Dendritic cell treated with granulocyte-macrophage colony-stimulating factor and Interleukin-4, amounts not matched to agents 40 ng/mL and 50 ng/mL, for 4 days (primary cell): ENCODE measurements at regions of chr11 and their contacts with region 1.

Region 1: DNA sequence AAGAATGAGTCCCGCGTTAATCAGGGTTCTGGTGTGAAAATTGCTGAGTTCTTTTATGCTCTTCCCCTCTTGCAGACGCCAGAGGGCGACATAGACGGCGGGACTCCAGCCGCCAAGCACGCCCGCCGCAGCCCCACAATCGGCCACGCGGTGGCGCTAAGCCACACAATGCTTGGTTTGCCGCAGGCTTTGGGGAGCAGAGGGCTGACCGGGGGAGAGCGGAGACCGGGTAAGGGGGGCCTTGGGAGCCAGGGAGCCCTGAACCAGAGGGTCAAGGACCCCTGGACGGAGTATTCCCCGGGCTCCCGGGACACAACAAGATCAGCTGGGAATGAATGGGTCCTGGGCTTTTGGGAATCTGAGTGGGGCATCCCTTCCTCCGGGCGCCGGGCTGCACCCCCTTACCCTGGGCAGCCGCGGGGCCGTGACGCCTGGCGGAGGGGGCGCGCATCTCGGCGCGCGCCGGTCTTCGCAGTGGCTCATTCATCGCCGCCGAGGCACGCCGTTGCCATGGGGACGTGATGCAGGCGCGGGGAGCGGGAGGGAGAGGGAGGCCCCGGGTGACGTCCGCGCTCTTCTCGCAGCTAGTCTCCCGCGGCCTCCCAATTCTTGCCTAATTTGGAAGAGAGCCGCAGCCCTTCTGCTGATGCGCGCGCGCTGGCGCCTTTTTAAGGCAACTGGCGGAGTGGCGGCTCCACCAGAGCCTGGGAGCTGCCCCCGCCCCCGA is 12.2 kb upstream of the NPAS4 start:
- H3K4me3 Mint-ChIP-seq: peak overlapping the region; percentile 58
- H3K27ac Mint-ChIP-seq: no peak overlapping the region
- H3K4me1 Mint-ChIP-seq: no peaks in the 10 kb centered on the region
- H3K27me3 Mint-ChIP-seq: peaks cover 53% of the 10 kb centered on the region

Region 2: DNA sequence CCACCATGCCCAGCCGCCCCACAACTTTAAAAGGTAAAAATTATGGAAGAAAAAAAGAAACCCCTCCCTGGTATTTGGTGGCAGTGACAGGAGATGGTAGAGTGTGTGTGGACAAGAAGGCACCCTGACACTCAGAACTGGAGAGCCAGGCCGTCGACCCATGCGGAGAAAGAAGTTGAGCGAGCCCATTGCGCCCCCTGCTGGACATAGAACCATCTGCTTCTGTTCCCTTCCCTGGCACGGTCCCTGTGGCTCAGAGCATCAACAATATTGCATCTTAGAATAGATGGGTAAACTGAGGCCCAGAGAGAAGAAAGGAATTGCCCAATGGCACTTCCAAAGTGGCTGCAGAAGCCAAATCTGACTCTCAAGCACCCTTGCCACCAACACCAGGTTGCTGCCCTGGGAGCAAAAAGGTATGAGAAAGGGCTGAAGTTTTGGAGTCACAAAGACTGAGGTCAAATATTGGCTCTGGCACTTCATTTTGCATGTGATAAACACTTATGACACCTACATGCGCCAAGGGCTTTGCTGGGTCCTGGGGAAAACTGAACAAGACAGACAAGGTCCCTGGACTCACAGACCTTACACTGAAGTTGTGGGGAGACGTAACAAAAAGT is 21.4 kb after region 1 on chr11:
- intact Hi-C with region 1: loop called (anchors 1 kb)
- H3K4me3 Mint-ChIP-seq: no peak overlapping the region
- H3K27ac Mint-ChIP-seq: no peak overlapping the region
- H3K4me1 Mint-ChIP-seq: peaks cover 17% of the 10 kb centered on the region
- H3K27me3 Mint-ChIP-seq: peaks cover 6% of the 10 kb centered on the region